Psoas muscle (tissue), 8 donors: ENCODE measurements at regions of chr19 and their contacts with region 1.

Region 1: DNA sequence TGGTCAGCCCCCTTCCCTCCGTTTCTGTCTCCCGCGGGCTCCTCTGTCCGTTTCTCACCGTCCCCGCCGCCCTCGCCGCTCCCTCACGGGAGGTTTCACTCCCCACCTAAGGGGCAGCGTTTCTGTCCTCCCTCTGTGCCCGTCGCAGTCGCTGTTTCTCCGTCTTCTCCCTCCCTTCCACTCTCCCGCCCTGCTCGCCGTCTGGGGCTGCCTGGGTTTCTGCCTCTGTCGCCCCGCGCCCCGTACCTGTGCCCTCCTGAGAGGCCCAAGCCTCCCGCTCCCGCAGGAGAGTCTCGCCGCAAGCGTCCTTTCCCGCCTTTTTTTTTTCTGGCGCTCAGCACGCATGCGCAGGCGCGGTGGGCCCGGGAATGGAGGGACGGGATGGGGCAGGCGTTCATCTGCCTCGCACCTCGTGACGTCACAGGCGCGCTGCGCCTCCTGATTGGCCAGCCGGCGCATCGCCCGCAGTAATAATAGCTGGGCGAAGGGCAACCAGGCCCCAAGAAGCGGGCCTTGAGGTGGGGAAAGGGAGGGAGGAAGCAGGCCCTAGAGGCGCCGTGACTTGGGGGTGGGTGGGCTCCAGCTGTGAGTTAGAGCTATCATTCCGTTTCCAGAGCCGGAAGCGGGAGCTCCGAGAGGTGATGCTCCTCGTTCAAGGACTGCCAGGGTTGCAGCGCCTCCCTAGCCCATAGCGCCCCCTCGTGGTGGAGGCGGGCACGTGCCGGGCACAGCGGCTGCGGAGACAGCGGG is 15.4 kb downstream of the SSC5D start:
- DNase-seq: peak; percentile 93 to 97
- ATAC-seq: peak; percentile 93 to 98 (median 95)
- H3K4me3 ChIP-seq: peak overlapping the region; percentile 52
- H3K27ac ChIP-seq: no peak overlapping the region
- H3K4me1 ChIP-seq: no peaks in the 10 kb centered on the region
- H3K27me3 ChIP-seq: peaks cover 0 to 24% (median 3%) of the 10 kb centered on the region in 3 donors
- CTCF ChIP-seq: peak; percentile 91

Region 2: GRCh38 chr19:55146078-55146704 is 357.5 kb before region 1 on chr19:
- intact Hi-C with region 1: loop called (anchors 5 to 10 kb)
- DNase-seq: no peak
- ATAC-seq: peak in 1 of 4 donors; percentile 29
- H3K4me3 ChIP-seq: peak overlapping the region; percentile 68
- H3K27ac ChIP-seq: peak overlapping the region; percentile 46
- H3K4me1 ChIP-seq: no peaks in the 10 kb centered on the region
- H3K27me3 ChIP-seq: peaks cover 0 to 49% (median 9%) of the 10 kb centered on the region in 3 donors
- CTCF ChIP-seq: peak; percentile 36

Region 3: GRCh38 chr19:55467236-55468053 is 36.2 kb before region 1 on chr19:
- intact Hi-C with region 1: loop called (anchors 5 kb)
- DNase-seq: peak; percentile 74 to 83
- ATAC-seq: peak; percentile 83 to 93 (median 84)
- H3K4me3 ChIP-seq: no peak overlapping the region
- H3K27ac ChIP-seq: no peak overlapping the region
- H3K4me1 ChIP-seq: peaks cover under 1% of the 10 kb centered on the region
- H3K27me3 ChIP-seq: no peaks in the 10 kb centered on the region
- CTCF ChIP-seq: peak; percentile 99